Posterior cingulate gyrus (tissue), 11 donors: ENCODE measurements at regions of chr18 and their contacts with region 1.

Region 1: DNA sequence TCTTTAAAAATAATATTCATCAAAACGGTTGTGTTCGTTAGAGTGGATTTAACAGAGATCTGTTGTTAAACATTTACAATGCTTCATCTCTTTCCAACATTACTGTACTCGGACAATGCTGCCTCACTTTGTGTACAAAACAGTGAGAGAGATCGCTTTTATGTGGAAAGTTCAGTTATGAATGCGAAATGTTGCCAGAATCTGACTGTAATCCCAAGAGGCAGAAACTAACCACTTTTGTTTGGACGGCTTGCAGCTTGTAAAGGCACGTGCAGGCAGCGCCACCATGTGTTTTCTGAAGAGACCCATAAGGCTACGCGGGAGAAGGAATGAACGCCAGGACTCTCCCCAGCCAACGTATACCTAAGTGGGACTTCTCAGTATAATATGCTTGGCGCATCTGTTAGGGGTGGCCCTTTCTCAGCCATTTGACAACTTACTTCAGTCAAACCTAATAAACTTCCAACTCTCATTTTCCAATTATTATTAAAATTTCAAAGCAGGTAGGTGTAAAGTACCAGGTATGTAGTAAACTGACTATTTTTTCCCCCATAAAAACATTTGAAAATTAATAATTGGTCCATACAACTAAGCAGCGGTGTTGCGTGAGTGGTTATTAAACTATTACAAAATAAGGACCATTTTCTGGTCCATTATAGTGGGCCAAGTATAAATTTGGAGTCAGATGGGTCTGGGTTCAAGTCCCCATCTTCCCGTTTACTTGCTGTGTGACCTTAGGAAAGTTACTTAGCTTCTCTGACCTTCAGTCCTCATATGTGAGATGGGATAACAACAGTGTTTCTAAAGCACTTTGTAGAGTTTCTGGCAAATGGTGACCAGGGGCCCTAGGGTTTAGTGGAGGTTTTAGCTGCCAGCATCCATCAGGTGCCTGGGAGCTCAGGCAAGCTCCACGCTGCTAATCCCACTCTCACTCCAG is 5.6 kb upstream of the NAPG start:
- DNase-seq: peak; percentile 62 to 97 (median 83)

Region 2: DNA sequence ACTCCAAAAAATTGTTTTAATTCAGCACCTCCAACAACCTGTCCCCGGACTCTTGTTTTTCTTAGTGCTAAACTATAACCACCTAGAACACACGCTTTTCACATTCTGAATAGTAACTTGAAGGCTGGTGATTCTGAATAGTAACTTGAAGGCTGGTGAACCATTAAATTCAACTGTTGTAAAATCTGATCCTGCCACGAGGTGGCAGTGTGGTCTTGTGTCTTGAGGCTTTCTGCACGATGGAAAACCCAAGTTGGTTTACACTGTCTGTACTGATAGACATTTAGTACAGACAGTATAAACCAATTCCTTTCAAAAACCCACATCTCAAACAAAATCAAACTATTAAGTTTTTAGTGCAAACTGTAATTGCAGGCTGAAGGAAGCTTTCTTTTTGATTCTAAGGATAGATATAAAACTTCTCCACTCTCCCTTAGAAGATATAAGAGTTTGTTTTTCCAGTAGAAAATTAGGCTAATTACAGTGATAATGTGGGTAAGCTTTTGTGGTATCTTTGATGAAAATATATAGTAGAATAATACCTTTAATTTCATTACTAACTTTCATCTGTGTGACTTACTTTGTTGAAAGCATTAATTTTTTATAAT is 548.9 kb before region 1 on chr18:
- intact Hi-C with region 1: loop called (anchors 1 kb)
- DNase-seq: peak in 6 of 10 donors; percentile 50 to 93 (median 78)

Region 3: GRCh38 chr18:10442551-10442971 is 77.7 kb before region 1 on chr18:
- intact Hi-C with region 1: loop called (anchors 5 kb)
- DNase-seq: peak in 6 of 10 donors; percentile 17 to 91 (median 44)

Region 4: DNA sequence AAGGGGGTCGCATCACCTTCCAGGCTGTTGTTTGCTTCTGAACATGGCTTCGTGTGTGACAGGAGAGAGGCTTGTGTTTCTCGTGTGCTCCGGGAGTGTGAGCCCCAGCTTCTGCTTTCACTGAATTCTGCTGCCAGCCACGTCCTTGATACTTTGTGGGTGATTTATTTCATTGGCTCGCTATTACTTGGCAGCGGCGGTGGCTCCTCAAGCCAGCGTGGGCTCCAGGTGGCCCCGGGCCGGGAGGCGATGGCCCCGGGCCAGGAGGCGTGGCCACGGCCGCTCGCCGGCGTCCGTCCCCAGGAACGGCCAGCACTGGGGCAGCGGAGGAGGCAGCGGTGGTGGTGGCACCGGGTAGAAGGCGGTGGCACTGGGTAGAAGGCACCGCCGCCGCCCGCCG is 68.7 kb after region 1 on chr18:
- intact Hi-C with region 1: no loop called
- DNase-seq: no peak